CD4-positive, alpha-beta T cell (primary cell): ENCODE measurements at regions of chr11 and their contacts with region 1.

Region 1: GRCh38 chr11:115379528-115379927 is 124.7 kb downstream of the CADM1 start:
- DNase-seq: no peak
- ATAC-seq: no peak
- H3K4me3 ChIP-seq: no peak overlapping the region
- H3K4me3 Mint-ChIP-seq: no peak overlapping the region
- H3K27ac ChIP-seq: no peak overlapping the region
- H3K27ac Mint-ChIP-seq: no peak overlapping the region
- H3K4me1 ChIP-seq: no peaks in the 10 kb centered on the region
- H3K4me1 Mint-ChIP-seq: no peaks in the 10 kb centered on the region
- H3K27me3 ChIP-seq: peaks cover 0 to 4% of the 10 kb centered on the region in 2 experiments
- H3K27me3 Mint-ChIP-seq: no peaks in the 10 kb centered on the region
- CTCF ChIP-seq: no peak

Region 2: DNA sequence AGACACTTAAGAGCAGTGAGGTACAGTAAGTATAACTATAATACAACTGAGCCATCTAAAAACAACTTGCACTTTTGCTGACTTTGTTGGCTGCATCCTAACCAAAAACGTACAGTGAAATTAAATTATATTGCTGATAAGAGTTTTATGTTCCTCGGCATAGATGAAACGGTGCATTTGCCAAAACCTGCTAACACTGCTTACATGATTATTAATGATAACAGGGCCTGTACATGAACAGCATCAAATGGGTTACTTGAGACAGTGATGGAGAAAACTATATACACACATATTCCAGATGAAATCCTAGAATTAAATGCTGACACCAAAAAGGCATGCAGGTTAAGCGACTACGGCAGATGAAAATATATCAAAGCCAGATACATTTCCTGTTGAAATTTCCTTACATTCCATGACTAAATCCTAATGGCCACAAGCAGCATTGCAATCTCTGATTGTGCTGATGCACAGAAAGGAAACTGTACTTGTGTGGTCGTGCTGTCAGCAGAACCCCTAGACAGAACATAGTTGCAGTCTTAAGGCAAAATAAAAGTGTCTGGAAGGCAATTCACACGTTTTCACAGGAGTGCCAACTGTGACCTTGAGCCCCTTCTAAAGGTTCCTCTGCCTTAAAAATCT is 19.2 kb before region 1 on chr11:
- CTCF ChIA-PET with region 1: no interaction called
- POLR2A ChIA-PET with region 1: no interaction called
- intact Hi-C with region 1: no loop called
- DNase-seq: no peak
- ATAC-seq: no peak
- H3K4me3 ChIP-seq: no peak overlapping the region
- H3K4me3 Mint-ChIP-seq: no peak overlapping the region
- H3K27ac ChIP-seq: no peak overlapping the region
- H3K27ac Mint-ChIP-seq: no peak overlapping the region
- H3K4me1 ChIP-seq: no peaks in the 10 kb centered on the region
- H3K4me1 Mint-ChIP-seq: no peaks in the 10 kb centered on the region
- H3K27me3 ChIP-seq: no peaks in the 10 kb centered on the region
- H3K27me3 Mint-ChIP-seq: peaks cover 1% of the 10 kb centered on the region
- CTCF ChIP-seq: no peak

Region 3: GRCh38 chr11:115439385-115439784 is 59.9 kb after region 1 on chr11:
- CTCF ChIA-PET with region 1: no interaction called
- POLR2A ChIA-PET with region 1: no interaction called
- intact Hi-C with region 1: loop called in 1 of 2 experiments (anchors 10 kb)
- DNase-seq: no peak
- ATAC-seq: no peak
- H3K4me3 ChIP-seq: no peak overlapping the region
- H3K4me3 Mint-ChIP-seq: no peak overlapping the region
- H3K27ac ChIP-seq: no peak overlapping the region
- H3K27ac Mint-ChIP-seq: no peak overlapping the region
- H3K4me1 ChIP-seq: no peaks in the 10 kb centered on the region
- H3K4me1 Mint-ChIP-seq: no peaks in the 10 kb centered on the region
- H3K27me3 ChIP-seq: no peaks in the 10 kb centered on the region
- H3K27me3 Mint-ChIP-seq: peaks cover 7% of the 10 kb centered on the region
- CTCF ChIP-seq: no peak

Region 4: DNA sequence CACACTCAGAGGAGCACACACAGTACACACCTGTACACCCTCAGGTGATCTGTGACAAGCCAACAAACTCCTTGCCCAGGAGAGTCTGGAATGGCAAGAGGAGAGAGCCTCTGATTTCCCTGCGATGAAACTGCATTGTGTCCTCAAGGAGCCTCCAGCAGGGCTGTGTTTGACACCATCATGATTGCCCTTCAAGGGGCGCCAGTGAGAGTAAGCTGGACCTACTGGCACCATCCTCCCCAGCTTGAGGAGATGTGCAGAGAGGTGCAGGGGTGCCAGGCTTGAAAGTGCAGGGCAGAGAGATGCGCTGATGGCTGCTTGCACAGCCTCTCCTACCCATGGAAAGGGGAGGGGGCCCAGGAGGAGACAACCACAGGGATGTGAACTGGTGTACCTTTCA is 313.5 kb after region 1 on chr11:
- CTCF ChIA-PET with region 1: no interaction called
- POLR2A ChIA-PET with region 1: no interaction called
- intact Hi-C with region 1: no loop called
- DNase-seq: no peak
- ATAC-seq: no peak
- H3K4me3 ChIP-seq: no peak overlapping the region
- H3K4me3 Mint-ChIP-seq: no peak overlapping the region
- H3K27ac ChIP-seq: no peak overlapping the region
- H3K27ac Mint-ChIP-seq: no peak overlapping the region
- H3K4me1 ChIP-seq: no peaks in the 10 kb centered on the region
- H3K4me1 Mint-ChIP-seq: no peaks in the 10 kb centered on the region
- H3K27me3 ChIP-seq: peaks cover 0 to 2% of the 10 kb centered on the region in 2 experiments
- H3K27me3 Mint-ChIP-seq: peaks cover 7% of the 10 kb centered on the region
- CTCF ChIP-seq: no peak

Region 5: DNA sequence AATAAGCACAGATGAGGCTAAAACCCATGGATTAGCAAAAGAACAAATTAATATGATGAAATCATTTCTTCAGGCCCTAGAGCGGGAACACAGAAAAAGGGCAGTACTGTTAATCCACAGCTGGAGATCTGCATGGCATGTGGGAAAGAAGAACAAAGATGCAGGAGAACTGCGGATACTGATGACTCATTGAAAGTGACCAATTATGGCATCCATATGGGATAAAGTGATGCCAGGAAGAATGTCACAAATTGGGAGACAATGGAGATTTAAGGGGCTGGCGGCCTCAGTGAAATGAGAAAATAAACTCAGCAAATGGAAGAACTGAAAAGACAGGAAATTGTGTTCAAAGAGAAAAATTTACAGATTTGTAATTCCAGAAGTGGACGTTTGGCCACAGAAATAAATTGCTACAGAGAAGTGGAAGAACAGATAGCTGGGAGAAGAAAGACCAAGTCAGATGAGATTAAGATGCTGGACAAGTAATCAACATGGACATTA is 1679.3 kb after region 1 on chr11:
- CTCF ChIA-PET with region 1: no interaction called
- POLR2A ChIA-PET with region 1: no interaction called
- intact Hi-C with region 1: no loop called
- DNase-seq: no peak
- ATAC-seq: no peak
- H3K4me3 ChIP-seq: no peak overlapping the region
- H3K4me3 Mint-ChIP-seq: no peak overlapping the region
- H3K27ac ChIP-seq: no peak overlapping the region
- H3K27ac Mint-ChIP-seq: no peak overlapping the region
- H3K4me1 ChIP-seq: peaks cover 12% of the 10 kb centered on the region
- H3K4me1 Mint-ChIP-seq: peaks cover 72% of the 10 kb centered on the region
- H3K27me3 ChIP-seq: no peaks in the 10 kb centered on the region
- H3K27me3 Mint-ChIP-seq: no peaks in the 10 kb centered on the region
- CTCF ChIP-seq: no peak